ENCODE measurements at regions of chr5 and their contacts with region 1.

Region 1: DNA sequence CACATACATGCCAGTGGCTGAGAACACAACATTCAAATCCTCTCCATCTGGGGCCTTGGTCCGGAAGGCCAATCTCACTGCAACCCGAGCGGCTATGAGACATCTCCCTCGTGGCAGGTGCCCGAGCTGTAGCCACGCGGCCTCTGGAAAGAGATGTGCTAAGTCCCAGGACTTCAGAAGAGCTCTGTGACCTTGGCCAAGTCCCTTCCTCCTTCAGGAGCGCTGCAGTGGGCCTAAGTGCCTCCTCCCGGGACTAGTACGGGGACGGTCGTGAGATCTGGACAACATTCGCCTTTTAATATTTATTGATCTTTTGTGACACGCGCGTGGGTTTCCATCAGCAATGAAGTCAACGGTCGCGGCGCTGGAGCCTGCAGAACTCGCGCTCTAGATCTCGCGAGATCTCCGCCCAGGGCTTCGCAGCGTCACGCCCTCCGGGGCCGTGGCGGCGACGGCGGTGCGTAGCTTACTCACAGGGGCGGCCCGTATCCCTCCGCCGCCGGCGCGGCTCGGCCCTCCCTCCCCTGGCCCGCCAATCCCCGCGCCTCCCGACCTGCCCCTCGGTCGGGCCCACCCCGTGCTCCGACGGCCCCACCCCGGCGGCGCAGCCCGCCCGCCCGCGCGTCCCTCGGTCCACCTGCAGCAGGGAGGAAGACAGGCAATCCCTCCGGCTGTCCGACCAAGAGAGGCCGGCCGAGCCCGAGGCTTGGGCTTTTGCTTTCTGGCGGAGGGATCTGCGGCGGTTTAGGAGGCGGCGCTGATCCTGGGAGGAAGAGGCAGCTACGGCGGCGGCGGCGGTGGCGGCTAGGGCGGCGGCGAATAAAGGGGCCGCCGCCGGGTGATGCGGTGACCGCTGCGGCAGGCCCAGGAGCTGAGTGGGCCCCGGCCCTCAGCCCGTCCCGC is at the start of gene UBE2D2:
- DNase-seq: peak; percentile 95 to 98 (median 98)
- ATAC-seq: peak; percentile 74 to 82
- H3K4me3 Mint-ChIP-seq: peak within 1 kb of the TSS; percentile 92 to 100 (median 99)
- H3K27ac Mint-ChIP-seq: peak within 1 kb of the TSS; percentile 93 to 99 (median 96)
- H3K4me1 Mint-ChIP-seq: peaks cover 10 to 45% (median 33%) of the 10 kb centered on the region in 4 donors
- H3K27me3 Mint-ChIP-seq: no peaks in the 10 kb centered on the region
- polyA plus RNA-seq, gene UBE2D2: 356 to 403 (median 359) TPM

Region 2: GRCh38 chr5:139397921-139398320 is 163.1 kb before region 1 on chr5:
- POLR2A ChIA-PET with region 1: no interaction called
- DNase-seq: no peak
- ATAC-seq: no peak
- H3K4me3 Mint-ChIP-seq: no peak overlapping the region
- H3K27ac Mint-ChIP-seq: no peak overlapping the region
- H3K4me1 Mint-ChIP-seq: peaks cover 4 to 16% (median 12%) of the 10 kb centered on the region in 4 donors
- H3K27me3 Mint-ChIP-seq: peaks cover 0 to 1% (median 0%) of the 10 kb centered on the region in 5 donors

Region 3: DNA sequence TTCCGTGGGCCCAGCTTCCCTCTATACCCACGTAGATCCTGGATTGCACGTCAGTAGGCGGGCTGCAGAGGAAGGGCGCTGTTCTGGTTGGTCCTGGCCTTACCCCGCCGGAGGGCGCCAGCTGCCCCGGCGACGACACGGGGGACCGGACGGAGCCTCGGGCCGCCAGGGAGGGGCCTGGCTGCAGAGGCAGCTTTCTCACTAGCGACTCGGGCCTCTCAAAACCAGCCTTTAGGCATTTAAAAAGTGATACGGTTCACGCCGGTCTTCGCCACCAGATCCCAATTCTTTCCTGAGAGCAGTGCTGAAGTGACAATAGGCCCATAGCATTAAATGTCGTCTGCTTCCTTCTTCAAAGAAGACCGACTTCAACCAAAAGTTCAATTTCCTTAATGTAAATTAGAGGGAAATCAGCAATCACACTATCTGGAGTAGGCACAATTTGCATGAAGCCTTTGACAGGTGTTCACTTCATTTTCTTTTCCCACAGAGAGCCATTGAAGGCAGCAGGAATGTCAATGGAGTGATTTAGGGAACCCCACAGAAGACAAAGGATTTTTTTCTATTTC is 17.5 kb before region 1 on chr5:
- POLR2A ChIA-PET with region 1: interaction called, 23 read pairs
- DNase-seq: peak; percentile 35 to 80 (median 48)
- ATAC-seq: peak; percentile 99 to 100
- H3K4me3 Mint-ChIP-seq: peak overlapping the region; percentile 51 to 75 (median 56)
- H3K27ac Mint-ChIP-seq: peak overlapping the region in 7 of 10 donors; percentile 68 to 85 (median 72)
- H3K4me1 Mint-ChIP-seq: peaks cover 0 to 10% (median 7%) of the 10 kb centered on the region in 4 donors
- H3K27me3 Mint-ChIP-seq: peaks cover 0 to 3% (median 0%) of the 10 kb centered on the region in 5 donors

Region 4: GRCh38 chr5:139574641-139575312 is 13.8 kb after region 1 on chr5:
- POLR2A ChIA-PET with region 1: interaction called, 224 read pairs
- DNase-seq: peak in 6 of 10 donors; percentile 14 to 62 (median 44)
- ATAC-seq: peak; percentile 39 to 58
- H3K4me3 Mint-ChIP-seq: peak overlapping the region in 9 of 10 donors; percentile 23 to 75 (median 65)
- H3K27ac Mint-ChIP-seq: peak overlapping the region in 9 of 10 donors; percentile 52 to 93 (median 87)
- H3K4me1 Mint-ChIP-seq: peaks cover 33 to 87% (median 78%) of the 10 kb centered on the region in 4 donors
- H3K27me3 Mint-ChIP-seq: no peaks in the 10 kb centered on the region

Region 5: GRCh38 chr5:139711067-139711905 is 150.3 kb after region 1 on chr5:
- POLR2A ChIA-PET with region 1: interaction called, 10 read pairs
- DNase-seq: peak; percentile 28 to 77 (median 64)
- ATAC-seq: peak; percentile 54 to 65
- H3K4me3 Mint-ChIP-seq: peak overlapping the region; percentile 72 to 87 (median 75)
- H3K27ac Mint-ChIP-seq: peak overlapping the region in 8 of 10 donors; percentile 65 to 96 (median 89)
- H3K4me1 Mint-ChIP-seq: peaks cover 14 to 45% (median 39%) of the 10 kb centered on the region in 4 donors
- H3K27me3 Mint-ChIP-seq: no peaks in the 10 kb centered on the region

Measured in naive thymus-derived CD8-positive, alpha-beta T cell (primary cell).